AG04450 (cell line): ENCODE measurements at regions of chr14 and their contacts with region 1.

Region 1: GRCh38 chr14:23068476-23069412 is 11.4 kb upstream of the CDH24 start:
- DNase-seq: peak; percentile 80
- H3K4me3 ChIP-seq: peak overlapping the region; percentile 49
- H3K27ac ChIP-seq: no peak overlapping the region
- H3K27me3 ChIP-seq: no peaks in the 10 kb centered on the region
- CTCF ChIP-seq: peak; percentile 100

Region 2: GRCh38 chr14:22955702-22956569 is 112.8 kb before region 1 on chr14:
- CTCF ChIA-PET with region 1: interaction called, 10 read pairs
- POLR2A ChIA-PET with region 1: interaction called, 4 read pairs
- DNase-seq: no peak
- H3K4me3 ChIP-seq: peak overlapping the region; percentile 66
- H3K27ac ChIP-seq: peak overlapping the region; percentile 68
- H3K27me3 ChIP-seq: no peaks in the 10 kb centered on the region
- CTCF ChIP-seq: no peak

Region 3: GRCh38 chr14:22994762-22995275 is 73.9 kb before region 1 on chr14:
- CTCF ChIA-PET with region 1: interaction called, 48 read pairs
- POLR2A ChIA-PET with region 1: no interaction called
- DNase-seq: no peak
- H3K4me3 ChIP-seq: no peak overlapping the region
- H3K27ac ChIP-seq: no peak overlapping the region
- H3K27me3 ChIP-seq: no peaks in the 10 kb centered on the region
- CTCF ChIP-seq: peak; percentile 78

Region 4: GRCh38 chr14:23034483-23035302 is 34.1 kb before region 1 on chr14 and contains the start of gene PSMB5:
- CTCF ChIA-PET with region 1: interaction called, 12 read pairs
- POLR2A ChIA-PET with region 1: no interaction called
- DNase-seq: peak; percentile 83
- H3K4me3 ChIP-seq: peak within 1 kb of the TSS; percentile 93
- H3K27ac ChIP-seq: peak within 1 kb of the TSS; percentile 94
- H3K27me3 ChIP-seq: no peaks in the 10 kb centered on the region
- CTCF ChIP-seq: no peak
- polyA plus RNA-seq, gene PSMB5: 282 and 292 TPM in 2 replicates

Region 5: DNA sequence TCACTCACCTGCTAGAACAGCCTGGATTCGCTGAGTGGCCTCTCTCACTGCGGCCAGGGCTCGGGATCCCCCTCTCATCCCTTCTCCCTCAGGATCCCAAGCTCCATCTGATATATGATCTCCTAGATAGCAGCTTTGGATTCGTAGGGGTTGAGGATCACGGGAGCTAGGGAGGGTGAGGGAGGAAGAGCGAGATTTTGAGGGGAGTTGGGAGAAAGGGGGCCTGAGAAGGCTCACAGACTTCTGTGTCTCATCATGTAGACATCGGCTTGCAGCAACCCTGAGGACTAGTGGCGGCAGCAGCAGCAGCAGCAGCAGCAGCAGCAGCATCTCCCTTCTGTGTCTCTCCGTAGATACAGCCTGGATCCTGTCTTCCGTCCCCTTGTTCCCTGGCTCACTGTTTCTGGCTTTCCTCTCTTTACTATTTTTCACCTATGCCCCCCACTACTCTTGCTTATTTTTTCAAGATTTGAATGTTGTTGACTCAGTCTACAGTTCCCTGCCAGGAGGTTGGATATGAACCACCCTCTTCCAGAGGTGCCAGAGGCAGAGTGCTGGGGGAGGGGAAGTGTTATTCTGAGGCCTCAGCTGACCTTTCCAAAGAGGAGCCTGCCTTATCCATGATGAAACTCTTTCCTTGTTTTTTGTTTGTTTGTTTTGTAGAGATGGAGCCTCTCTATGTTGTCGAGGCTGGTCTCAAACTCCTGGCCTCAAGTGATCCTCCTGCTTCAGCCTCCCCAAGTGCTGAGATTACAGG is 36.0 kb after region 1 on chr14 and contains the start of gene CIROP:
- CTCF ChIA-PET with region 1: interaction called, 152 read pairs
- POLR2A ChIA-PET with region 1: interaction called, 3 read pairs
- DNase-seq: no peak
- H3K4me3 ChIP-seq: peak within 1 kb of the TSS; percentile 1; the same call in 1 of the 2 replicates
- H3K27ac ChIP-seq: no peak within 1 kb of the TSS
- H3K27me3 ChIP-seq: no peaks in the 10 kb centered on the region
- CTCF ChIP-seq: no peak
- polyA plus RNA-seq, gene CIROP: 0.07 and 0.12 TPM in 2 replicates

Region 6: GRCh38 chr14:23186913-23187654 is 118.3 kb after region 1 on chr14:
- CTCF ChIA-PET with region 1: interaction called, 30 read pairs
- POLR2A ChIA-PET with region 1: no interaction called
- DNase-seq: peak; percentile 47
- H3K4me3 ChIP-seq: no peak overlapping the region
- H3K27ac ChIP-seq: no peak overlapping the region
- H3K27me3 ChIP-seq: peaks cover 24% of the 10 kb centered on the region
- CTCF ChIP-seq: peak; percentile 89